SK-N-SH (cell line): ENCODE measurements at regions of chr11 and their contacts with region 1.

Region 1: DNA sequence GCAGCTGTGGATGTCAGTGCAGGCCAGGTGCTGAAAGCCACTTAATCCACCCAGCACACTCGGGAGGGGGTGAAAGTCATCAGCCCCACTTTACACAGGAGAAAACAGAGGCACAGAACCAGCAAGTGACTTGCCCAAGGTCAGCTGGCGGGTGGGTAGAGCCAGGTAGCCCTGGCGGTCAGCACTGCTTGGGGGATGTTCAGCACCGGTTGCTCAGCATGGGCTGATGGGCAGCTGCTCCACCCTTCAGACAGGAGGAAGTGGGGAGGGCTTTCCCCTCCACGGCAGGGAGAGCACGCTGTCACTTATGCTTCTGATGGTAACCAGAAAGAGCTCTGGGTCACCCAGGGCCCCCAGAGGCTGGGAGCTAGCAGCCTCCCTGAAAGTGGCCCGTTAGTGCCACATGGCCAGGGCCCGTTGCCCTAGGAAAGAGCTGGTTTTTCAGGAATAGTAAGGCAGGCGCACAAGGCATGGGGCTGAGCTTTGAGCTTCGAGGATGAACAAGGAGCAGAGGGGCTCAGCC is 417.9 kb downstream of the CTTN start:
- DNase-seq: peak; percentile 72
- H3K4me3 ChIP-seq: no peak overlapping the region
- H3K27ac ChIP-seq: no peak overlapping the region
- H3K4me1 ChIP-seq: peaks cover 0 to 2% of the 10 kb centered on the region in 2 experiments; a peak in 1 of 4 replicates
- H3K27me3 ChIP-seq: no peaks in the 10 kb centered on the region
- CTCF ChIP-seq: no peak
- EP300 ChIP-seq: no peak
- RAD21 ChIP-seq: no peak

Region 2: GRCh38 chr11:70675697-70676374 is 140.4 kb before region 1 on chr11:
- CTCF ChIA-PET with region 1: no interaction called
- POLR2A ChIA-PET with region 1: no interaction called
- DNase-seq: no peak
- H3K4me3 ChIP-seq: no peak overlapping the region
- H3K27ac ChIP-seq: no peak overlapping the region
- H3K4me1 ChIP-seq: no peaks in the 10 kb centered on the region; a peak in 1 of 4 replicates
- H3K27me3 ChIP-seq: no peaks in the 10 kb centered on the region
- CTCF ChIP-seq: no peak
- EP300 ChIP-seq: no peak
- RAD21 ChIP-seq: no peak

Region 3: GRCh38 chr11:70742553-70743291 is 73.5 kb before region 1 on chr11:
- CTCF ChIA-PET with region 1: no interaction called
- POLR2A ChIA-PET with region 1: no interaction called
- DNase-seq: peak; percentile 82
- H3K4me3 ChIP-seq: no peak overlapping the region
- H3K27ac ChIP-seq: no peak overlapping the region
- H3K4me1 ChIP-seq: peaks cover 0 to 10% of the 10 kb centered on the region in 2 experiments; a peak in 1 of 4 replicates
- H3K27me3 ChIP-seq: no peaks in the 10 kb centered on the region
- CTCF ChIP-seq: no peak
- EP300 ChIP-seq: no peak
- RAD21 ChIP-seq: no peak

Region 4: GRCh38 chr11:70778883-70779282 is 37.3 kb before region 1 on chr11:
- CTCF ChIA-PET with region 1: interaction called, 10 read pairs
- POLR2A ChIA-PET with region 1: no interaction called
- DNase-seq: peak; percentile 74
- H3K4me3 ChIP-seq: no peak overlapping the region
- H3K27ac ChIP-seq: no peak overlapping the region
- H3K4me1 ChIP-seq: peaks cover 0 to 3% of the 10 kb centered on the region in 2 experiments; a peak in 1 of 4 replicates
- H3K27me3 ChIP-seq: no peaks in the 10 kb centered on the region
- CTCF ChIP-seq: no peak
- EP300 ChIP-seq: no peak
- RAD21 ChIP-seq: no peak

Region 5: GRCh38 chr11:70826541-70827335 is 10.5 kb after region 1 on chr11:
- CTCF ChIA-PET with region 1: interaction called, 38 read pairs
- POLR2A ChIA-PET with region 1: no interaction called
- DNase-seq: peak; percentile 83
- H3K4me3 ChIP-seq: peak overlapping the region in 1 of 2 experiments; percentile 25; a peak in 1 of 4 replicates
- H3K27ac ChIP-seq: no peak overlapping the region
- H3K4me1 ChIP-seq: peaks cover 0 to 20% of the 10 kb centered on the region in 2 experiments; a peak in 1 of 4 replicates
- H3K27me3 ChIP-seq: no peaks in the 10 kb centered on the region
- CTCF ChIP-seq: no peak
- EP300 ChIP-seq: no peak
- RAD21 ChIP-seq: no peak

Region 6: GRCh38 chr11:70841264-70841663 is 25.0 kb after region 1 on chr11:
- CTCF ChIA-PET with region 1: interaction called, 17 read pairs
- POLR2A ChIA-PET with region 1: no interaction called
- DNase-seq: no peak
- H3K4me3 ChIP-seq: no peak overlapping the region
- H3K27ac ChIP-seq: no peak overlapping the region
- H3K4me1 ChIP-seq: no peaks in the 10 kb centered on the region
- H3K27me3 ChIP-seq: no peaks in the 10 kb centered on the region
- CTCF ChIP-seq: no peak
- EP300 ChIP-seq: no peak
- RAD21 ChIP-seq: no peak

Region 7: DNA sequence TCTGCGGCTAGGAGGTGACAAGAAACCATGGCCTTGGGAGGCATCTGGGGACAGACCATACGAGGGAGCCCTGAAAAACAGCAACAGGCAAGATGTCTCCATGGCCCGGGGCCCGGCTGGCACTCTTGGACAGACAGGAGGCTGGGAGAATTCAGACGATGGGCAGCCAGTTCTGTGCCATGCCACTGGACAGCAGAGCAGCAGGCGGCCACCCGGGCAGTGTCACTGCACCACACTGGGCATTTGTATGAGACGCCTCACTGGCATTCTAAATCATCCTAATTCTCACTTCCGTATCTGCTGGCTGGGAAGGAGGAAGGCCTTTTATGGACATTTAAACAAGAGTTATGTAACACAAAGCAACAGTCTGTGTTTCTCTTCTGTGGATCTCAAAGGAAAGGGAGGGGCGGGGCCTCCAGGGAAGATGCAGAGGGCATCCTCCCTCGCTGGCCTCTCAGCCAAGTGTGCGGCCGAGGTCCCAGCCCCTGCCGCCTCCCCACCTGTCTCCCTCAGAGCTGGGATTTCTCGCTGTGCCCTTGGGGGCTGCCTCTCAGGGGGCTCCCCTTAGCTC is 85.8 kb after region 1 on chr11:
- CTCF ChIA-PET with region 1: interaction called, 10 read pairs
- POLR2A ChIA-PET with region 1: no interaction called
- DNase-seq: no peak
- H3K4me3 ChIP-seq: no peak overlapping the region
- H3K27ac ChIP-seq: no peak overlapping the region
- H3K4me1 ChIP-seq: no peaks in the 10 kb centered on the region
- H3K27me3 ChIP-seq: no peaks in the 10 kb centered on the region
- CTCF ChIP-seq: no peak
- EP300 ChIP-seq: no peak
- RAD21 ChIP-seq: no peak

Region 8: DNA sequence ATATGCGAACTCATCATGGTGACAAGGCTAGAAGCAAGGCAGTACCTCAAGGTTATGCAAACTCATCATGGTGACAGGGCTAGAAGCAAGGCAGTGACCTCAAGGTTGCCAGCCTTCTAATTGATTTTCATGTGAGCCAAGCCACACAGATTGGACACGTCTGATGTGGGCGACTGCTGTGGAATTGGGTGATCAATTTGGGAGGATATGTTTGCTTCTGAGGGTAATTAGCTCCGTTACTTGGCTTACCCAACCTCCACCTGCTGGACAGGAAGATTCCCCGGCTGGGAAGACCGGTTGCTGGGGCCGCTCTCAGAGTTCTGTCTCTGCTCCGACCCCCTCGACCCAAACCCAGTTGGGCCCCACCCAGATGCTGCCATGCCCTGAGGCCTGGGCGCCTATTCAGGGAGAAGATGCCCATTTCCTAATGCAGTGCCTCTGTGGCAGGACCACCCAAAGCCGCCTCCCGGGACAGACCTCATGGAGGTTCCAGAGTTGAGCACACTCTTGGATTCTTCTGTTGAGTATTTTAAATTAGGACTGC is 506.0 kb after region 1 on chr11:
- CTCF ChIA-PET with region 1: no interaction called
- POLR2A ChIA-PET with region 1: no interaction called
- DNase-seq: no peak
- H3K4me3 ChIP-seq: no peak overlapping the region
- H3K27ac ChIP-seq: no peak overlapping the region
- H3K4me1 ChIP-seq: no peaks in the 10 kb centered on the region
- H3K27me3 ChIP-seq: no peaks in the 10 kb centered on the region
- CTCF ChIP-seq: no peak
- EP300 ChIP-seq: no peak
- RAD21 ChIP-seq: no peak